ENCODE measurements at regions of chr12 and their contacts with region 1.

Region 1: DNA sequence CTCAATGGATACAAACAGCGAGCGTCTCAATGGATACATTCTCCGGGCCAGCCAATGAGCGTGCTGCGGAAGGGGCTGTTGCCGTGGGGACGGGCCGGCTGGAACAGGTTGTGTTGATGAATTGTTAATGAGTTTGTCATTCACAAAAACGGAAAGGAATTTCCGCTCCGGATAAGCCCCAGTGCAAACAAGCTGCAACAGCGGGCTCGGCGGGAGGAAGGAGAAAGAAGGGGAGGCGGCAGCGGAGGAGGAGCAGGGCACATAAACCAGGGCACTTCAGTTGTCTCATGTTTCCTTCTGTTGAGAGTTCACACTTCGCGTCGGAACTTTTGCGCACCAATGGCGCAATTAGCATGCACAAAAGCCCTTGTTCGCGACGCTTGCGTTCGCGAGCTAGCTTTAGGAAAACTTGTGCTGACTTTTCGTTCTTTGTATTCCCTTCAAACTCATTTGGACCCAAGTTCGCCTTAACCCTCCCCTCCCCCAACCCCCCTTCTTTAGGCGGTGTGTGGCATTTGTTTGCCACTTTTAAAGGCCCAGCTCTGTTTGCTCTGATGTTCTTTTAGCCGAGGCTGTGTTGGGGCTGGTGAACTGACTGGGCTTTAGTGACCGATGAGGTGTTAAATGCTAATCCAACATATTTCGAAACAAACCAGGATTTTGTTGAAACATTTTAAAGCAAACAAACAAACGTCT is at the start of gene DUSP6:
- DNase-seq: peak; percentile 99
- H3K4me3 Mint-ChIP-seq: peak within 1 kb of the TSS; percentile 82
- H3K27ac Mint-ChIP-seq: peak within 1 kb of the TSS; percentile 96
- H3K4me1 Mint-ChIP-seq: peaks cover 40% of the 10 kb centered on the region
- H3K27me3 Mint-ChIP-seq: no peaks in the 10 kb centered on the region
- CTCF ChIP-seq: no peak
- total RNA-seq, gene DUSP6: 99.9 and 149 TPM in 2 replicates

Region 2: GRCh38 chr12:89064780-89065179 is 287.9 kb before region 1 on chr12:
- CTCF ChIA-PET with region 1: no interaction called
- POLR2A ChIA-PET with region 1: interaction called, 18 read pairs
- intact Hi-C with region 1: no loop called
- DNase-seq: peak; percentile 80
- H3K4me3 Mint-ChIP-seq: no peak overlapping the region
- H3K27ac Mint-ChIP-seq: no peak overlapping the region
- H3K4me1 Mint-ChIP-seq: peaks cover 27% of the 10 kb centered on the region
- H3K27me3 Mint-ChIP-seq: no peaks in the 10 kb centered on the region
- CTCF ChIP-seq: no peak

Region 3: DNA sequence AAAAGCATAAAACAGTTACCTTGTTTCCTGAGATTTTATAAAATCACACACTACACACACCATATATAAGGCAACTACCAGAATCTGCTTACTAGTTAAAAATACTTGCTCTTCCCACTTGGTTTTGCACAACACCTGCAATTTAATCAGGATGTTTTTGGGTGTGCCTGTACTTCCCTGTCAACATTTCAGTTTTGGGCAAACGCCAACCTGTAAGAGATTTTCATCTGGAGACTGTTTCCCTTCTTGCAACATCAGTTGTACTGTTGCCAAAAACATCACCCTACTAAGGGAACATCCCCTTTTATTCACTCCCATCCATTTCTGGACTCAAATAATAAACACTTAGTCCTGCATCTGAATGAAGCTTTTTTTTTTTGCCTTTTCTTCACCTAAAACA is 172.7 kb before region 1 on chr12:
- CTCF ChIA-PET with region 1: interaction called, 5 read pairs
- POLR2A ChIA-PET with region 1: interaction called, 155 read pairs
- intact Hi-C with region 1: loop called (anchors 1 kb)
- DNase-seq: peak; percentile 100
- H3K4me3 Mint-ChIP-seq: peak overlapping the region; percentile 64
- H3K27ac Mint-ChIP-seq: peak overlapping the region; percentile 78
- H3K4me1 Mint-ChIP-seq: peaks cover 41% of the 10 kb centered on the region
- H3K27me3 Mint-ChIP-seq: no peaks in the 10 kb centered on the region
- CTCF ChIP-seq: no peak

Region 4: DNA sequence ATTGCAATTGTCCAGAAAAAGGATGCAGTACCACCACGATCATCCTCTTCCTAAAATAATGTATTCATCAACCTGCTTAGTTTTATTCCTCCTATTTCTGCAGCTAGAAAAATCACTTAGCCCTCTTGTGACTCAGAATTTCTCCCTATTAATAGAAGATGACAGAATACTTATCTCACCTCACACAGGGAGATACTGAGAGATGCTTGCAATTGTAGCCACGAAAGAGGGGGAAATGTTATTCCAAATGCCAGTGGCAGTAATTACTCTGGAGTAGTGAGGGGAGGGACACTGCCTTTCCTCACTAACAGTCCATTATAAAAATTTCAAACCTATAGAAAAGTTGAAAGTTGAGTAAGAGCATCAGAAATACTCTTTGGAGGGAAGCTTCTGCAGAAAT is 11.4 kb after region 1 on chr12:
- CTCF ChIA-PET with region 1: no interaction called
- POLR2A ChIA-PET with region 1: interaction called, 10 read pairs
- intact Hi-C with region 1: no loop called
- DNase-seq: no peak
- H3K4me3 Mint-ChIP-seq: no peak overlapping the region
- H3K27ac Mint-ChIP-seq: no peak overlapping the region
- H3K4me1 Mint-ChIP-seq: peaks cover 18% of the 10 kb centered on the region
- H3K27me3 Mint-ChIP-seq: no peaks in the 10 kb centered on the region
- CTCF ChIP-seq: no peak

Region 5: GRCh38 chr12:89461649-89462612 is 109.3 kb after region 1 on chr12:
- CTCF ChIA-PET with region 1: interaction called, 19 read pairs
- POLR2A ChIA-PET with region 1: interaction called, 25 read pairs
- intact Hi-C with region 1: loop called (anchors 1 kb)
- DNase-seq: peak; percentile 71
- H3K4me3 Mint-ChIP-seq: peak overlapping the region; percentile 20
- H3K27ac Mint-ChIP-seq: peak overlapping the region; percentile 9
- H3K4me1 Mint-ChIP-seq: peaks cover 8% of the 10 kb centered on the region
- H3K27me3 Mint-ChIP-seq: no peaks in the 10 kb centered on the region
- CTCF ChIP-seq: peak; percentile 48

Region 6: DNA sequence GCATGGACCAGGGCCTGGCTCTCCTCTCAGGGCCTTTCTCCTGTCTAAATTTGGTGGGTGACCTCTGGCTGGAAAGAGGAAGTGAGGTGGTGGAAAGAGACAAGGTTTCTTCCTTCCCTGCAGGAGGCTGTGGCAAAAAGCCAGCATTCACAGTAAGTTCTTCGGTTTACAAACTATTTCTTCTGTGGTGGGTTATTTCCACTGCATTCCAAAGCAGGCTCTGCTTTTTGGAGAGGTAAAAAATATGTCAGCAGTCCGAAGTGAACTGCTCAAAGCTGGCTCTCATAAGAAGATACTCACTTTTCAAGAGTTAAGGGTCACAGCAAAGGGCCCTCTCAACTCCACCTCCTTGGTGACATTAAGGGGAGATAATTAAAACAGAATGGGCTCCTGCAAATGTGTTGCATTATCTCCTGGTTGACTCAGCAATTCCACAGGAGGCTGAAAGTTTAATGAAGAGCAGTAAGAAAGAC is 222.1 kb after region 1 on chr12:
- CTCF ChIA-PET with region 1: no interaction called
- POLR2A ChIA-PET with region 1: no interaction called
- intact Hi-C with region 1: no loop called
- DNase-seq: no peak
- H3K4me3 Mint-ChIP-seq: no peak overlapping the region
- H3K27ac Mint-ChIP-seq: no peak overlapping the region
- H3K4me1 Mint-ChIP-seq: peaks cover 24% of the 10 kb centered on the region
- H3K27me3 Mint-ChIP-seq: no peaks in the 10 kb centered on the region
- CTCF ChIP-seq: no peak

Measured in MCF 10A (cell line).